ENCODE measurements at regions of chr1 and their contacts with region 1.

Region 1: GRCh38 chr1:109282952-109283747 is at the start of gene PSRC1:
- DNase-seq: peak; percentile 92
- H3K4me3 ChIP-seq: peak within 1 kb of the TSS; percentile 93
- H3K27ac ChIP-seq: peak within 1 kb of the TSS; percentile 83
- H3K27me3 ChIP-seq: no peaks in the 10 kb centered on the region
- CTCF ChIP-seq: peak; percentile 68
- polyA plus RNA-seq, gene PSRC1: 17.3 and 18.5 TPM in 2 replicates

Region 2: DNA sequence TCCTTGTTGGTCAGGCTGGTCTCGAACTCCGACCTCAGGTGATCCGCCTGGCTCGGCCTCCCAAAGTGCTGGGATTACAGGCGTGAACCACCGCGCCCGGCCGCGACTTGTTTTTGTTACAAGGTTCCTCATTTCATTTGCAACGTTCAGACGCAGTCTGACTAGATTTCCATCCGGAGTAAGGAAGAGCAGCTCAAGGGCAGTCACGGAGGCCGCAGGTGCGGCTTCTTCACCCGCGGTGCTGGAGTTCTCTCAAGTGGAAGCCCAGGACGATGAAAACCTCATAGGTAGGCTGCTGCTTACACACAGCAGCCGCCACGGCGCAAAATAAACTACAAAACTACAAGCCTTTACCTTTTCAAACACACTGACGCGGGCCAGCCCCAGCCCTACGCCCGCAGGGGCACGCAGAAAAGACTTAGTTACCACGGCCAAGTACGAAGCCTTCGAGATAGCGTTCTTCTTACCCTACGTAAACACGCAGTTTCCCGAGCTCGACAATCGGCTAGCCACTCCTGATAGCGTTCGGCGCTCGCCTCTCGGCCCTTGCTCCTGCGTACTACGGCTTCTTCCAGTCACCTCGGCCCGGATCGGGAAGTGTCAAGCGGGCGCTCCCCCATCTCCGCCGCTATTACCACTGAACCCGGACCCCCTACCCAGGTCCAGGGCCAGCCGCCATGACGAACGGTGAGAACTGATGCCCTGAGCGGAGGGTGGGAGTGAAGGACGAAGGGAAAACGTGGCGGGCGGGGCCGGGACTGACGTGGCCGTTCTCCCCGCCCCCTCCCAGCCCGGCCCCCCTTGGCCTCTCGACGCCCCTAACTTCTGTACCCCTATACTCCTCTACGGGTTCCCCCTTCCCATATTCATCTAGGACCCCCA is 192.7 kb before region 1 on chr1 and contains the start of gene TMEM167B:
- CTCF ChIA-PET with region 1: interaction called, 13 read pairs
- POLR2A ChIA-PET with region 1: no interaction called
- DNase-seq: peak; percentile 79
- H3K4me3 ChIP-seq: peak within 1 kb of the TSS; percentile 92
- H3K27ac ChIP-seq: peak within 1 kb of the TSS; percentile 99
- H3K27me3 ChIP-seq: no peaks in the 10 kb centered on the region
- CTCF ChIP-seq: no peak
- polyA plus RNA-seq, gene TMEM167B: 38.8 and 39.0 TPM in 2 replicates